ENCODE measurements at regions of chr19 and their contacts with region 1.

Region 1: GRCh38 chr19:54168174-54168917 is 4.6 kb downstream of the TMC4 start:
- DNase-seq: peak; percentile 92
- ATAC-seq: peak; percentile 91
- H3K4me3 Mint-ChIP-seq: no peak overlapping the region
- H3K27ac Mint-ChIP-seq: no peak overlapping the region
- H3K4me1 Mint-ChIP-seq: peaks cover 13% of the 10 kb centered on the region
- H3K27me3 Mint-ChIP-seq: peaks cover 8% of the 10 kb centered on the region

Region 2: GRCh38 chr19:53824134-53824611 is 344.2 kb before region 1 on chr19 and contains the start of gene NLRP12:
- CTCF ChIA-PET with region 1: no interaction called
- DNase-seq: no peak
- ATAC-seq: no peak
- H3K4me3 Mint-ChIP-seq: no peak within 1 kb of the TSS
- H3K27ac Mint-ChIP-seq: no peak within 1 kb of the TSS
- H3K4me1 Mint-ChIP-seq: peaks cover 4% of the 10 kb centered on the region
- H3K27me3 Mint-ChIP-seq: peaks cover 17% of the 10 kb centered on the region
- total RNA-seq, gene NLRP12: not detected

Region 3: GRCh38 chr19:54152878-54153524 is 15.3 kb before region 1 on chr19:
- CTCF ChIA-PET with region 1: no interaction called
- DNase-seq: no peak
- ATAC-seq: no peak
- H3K4me3 Mint-ChIP-seq: no peak overlapping the region
- H3K27ac Mint-ChIP-seq: no peak overlapping the region
- H3K4me1 Mint-ChIP-seq: peaks cover 21% of the 10 kb centered on the region
- H3K27me3 Mint-ChIP-seq: no peaks in the 10 kb centered on the region

Region 4: GRCh38 chr19:54183431-54183830 is 15.1 kb after region 1 on chr19:
- CTCF ChIA-PET with region 1: interaction called, 15 read pairs
- DNase-seq: no peak
- ATAC-seq: no peak
- H3K4me3 Mint-ChIP-seq: no peak overlapping the region
- H3K27ac Mint-ChIP-seq: no peak overlapping the region
- H3K4me1 Mint-ChIP-seq: peaks cover 15% of the 10 kb centered on the region
- H3K27me3 Mint-ChIP-seq: no peaks in the 10 kb centered on the region

Region 5: DNA sequence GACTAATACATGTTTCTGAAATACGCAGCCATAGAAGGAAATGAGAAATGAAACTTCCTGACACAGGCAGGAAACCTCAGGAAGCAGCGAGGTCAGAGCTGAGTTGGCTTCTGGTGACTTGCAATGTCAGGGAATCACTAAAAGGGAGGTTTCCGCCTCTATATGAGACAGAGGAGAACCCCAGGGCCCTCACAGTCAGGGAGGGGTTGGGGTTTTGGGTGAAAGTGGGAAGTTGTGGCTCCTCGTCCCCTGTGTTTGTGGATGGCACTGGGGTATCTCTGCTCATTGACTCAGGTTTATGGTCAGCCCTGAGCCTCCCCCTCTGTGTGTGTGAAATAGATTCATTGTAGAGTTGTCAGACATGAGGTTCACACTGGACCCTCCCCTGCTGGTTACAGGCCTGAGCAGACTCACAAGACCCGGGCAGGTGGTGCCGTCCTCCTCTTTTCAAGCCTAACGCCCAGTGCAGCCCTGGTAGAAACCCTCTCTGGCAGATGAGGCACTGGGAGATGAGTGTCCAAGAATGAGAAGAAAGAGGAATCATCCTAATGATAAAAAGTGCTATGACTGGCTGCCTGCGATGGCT is 79.8 kb after region 1 on chr19:
- CTCF ChIA-PET with region 1: no interaction called
- DNase-seq: peak; percentile 68
- ATAC-seq: peak; percentile 76
- H3K4me3 Mint-ChIP-seq: peak overlapping the region; percentile 10
- H3K27ac Mint-ChIP-seq: no peak overlapping the region
- H3K4me1 Mint-ChIP-seq: peaks cover 15% of the 10 kb centered on the region
- H3K27me3 Mint-ChIP-seq: peaks cover 26% of the 10 kb centered on the region

Region 6: DNA sequence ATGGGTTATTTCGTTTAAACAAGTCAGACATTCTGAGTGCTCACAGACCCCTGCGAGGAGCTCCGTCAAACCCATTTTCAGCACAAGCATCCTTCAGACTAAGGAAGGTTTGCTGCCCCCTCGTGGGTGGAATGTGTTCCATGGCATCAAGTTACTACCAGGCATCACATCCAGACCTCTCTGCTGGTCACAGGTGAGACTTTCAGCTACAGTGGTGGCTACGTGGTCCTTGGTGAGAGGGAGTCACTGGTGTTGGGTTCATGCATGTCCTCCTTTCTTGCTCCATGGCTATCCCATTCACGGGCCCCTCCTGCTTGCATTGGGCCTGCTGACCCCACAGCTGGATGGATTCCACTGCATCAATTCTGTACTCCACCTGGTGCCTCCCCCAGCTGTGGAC is 97.8 kb after region 1 on chr19:
- CTCF ChIA-PET with region 1: interaction called, 14 read pairs
- DNase-seq: peak; percentile 82
- ATAC-seq: peak; percentile 55
- H3K4me3 Mint-ChIP-seq: no peak overlapping the region
- H3K27ac Mint-ChIP-seq: no peak overlapping the region
- H3K4me1 Mint-ChIP-seq: no peaks in the 10 kb centered on the region
- H3K27me3 Mint-ChIP-seq: peaks cover 40% of the 10 kb centered on the region